Mammary epithelial cell (primary cell): ENCODE measurements at regions of chr2 and their contacts with region 1.

Region 1: DNA sequence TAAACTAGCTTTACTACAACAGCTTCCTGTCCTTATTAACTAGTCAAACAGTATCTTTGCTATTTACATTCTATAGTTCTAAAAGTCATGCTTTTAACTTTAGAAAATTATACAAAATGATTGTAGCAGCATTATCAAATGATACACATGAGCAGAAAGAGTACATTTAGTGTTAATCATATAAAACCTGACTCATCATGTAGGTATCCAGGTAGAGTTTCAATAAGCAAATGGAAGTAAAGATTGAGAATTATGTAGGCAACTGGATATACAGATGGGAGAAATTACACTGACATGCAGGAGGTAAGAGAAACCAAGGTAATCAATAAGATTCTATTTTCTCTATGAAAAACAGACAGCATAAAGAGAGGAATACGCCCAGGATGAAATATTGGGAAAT is 33.8 kb downstream of the TRIP12 start:
- DNase-seq: peak; percentile 26
- H3K4me3 ChIP-seq: no peak overlapping the region
- H3K27ac ChIP-seq: no peak overlapping the region
- H3K4me1 ChIP-seq: peaks cover 11% of the 10 kb centered on the region
- H3K27me3 ChIP-seq: no peaks in the 10 kb centered on the region
- CTCF ChIP-seq: no peak

Region 2: GRCh38 chr2:229860334-229860733 is 27.7 kb before region 1 on chr2:
- CTCF ChIA-PET with region 1: no interaction called
- dilution Hi-C with region 1: no loop called
- in situ Hi-C with region 1: no loop called
- intact Hi-C with region 1: loop called (anchors 1 kb)
- DNase-seq: no peak
- H3K4me3 ChIP-seq: no peak overlapping the region
- H3K27ac ChIP-seq: no peak overlapping the region
- H3K4me1 ChIP-seq: no peaks in the 10 kb centered on the region
- H3K27me3 ChIP-seq: no peaks in the 10 kb centered on the region
- CTCF ChIP-seq: no peak

Region 3: GRCh38 chr2:229873123-229873581 is 14.9 kb before region 1 on chr2:
- CTCF ChIA-PET with region 1: interaction called, 10 read pairs
- dilution Hi-C with region 1: no loop called
- in situ Hi-C with region 1: no loop called
- intact Hi-C with region 1: no loop called
- DNase-seq: no peak
- H3K4me3 ChIP-seq: no peak overlapping the region
- H3K27ac ChIP-seq: no peak overlapping the region
- H3K4me1 ChIP-seq: peaks cover 4% of the 10 kb centered on the region
- H3K27me3 ChIP-seq: no peaks in the 10 kb centered on the region
- CTCF ChIP-seq: no peak